Activated CD4-positive, alpha-beta memory T cell treated with anti-CD3 and anti-CD28 coated beads, Interleukin-2, amount 10 ng/mL, durations not matched to agents 7 days and 5 days (primary cell): ENCODE measurements at regions of chr2 and their contacts with region 1.

Region 1: DNA sequence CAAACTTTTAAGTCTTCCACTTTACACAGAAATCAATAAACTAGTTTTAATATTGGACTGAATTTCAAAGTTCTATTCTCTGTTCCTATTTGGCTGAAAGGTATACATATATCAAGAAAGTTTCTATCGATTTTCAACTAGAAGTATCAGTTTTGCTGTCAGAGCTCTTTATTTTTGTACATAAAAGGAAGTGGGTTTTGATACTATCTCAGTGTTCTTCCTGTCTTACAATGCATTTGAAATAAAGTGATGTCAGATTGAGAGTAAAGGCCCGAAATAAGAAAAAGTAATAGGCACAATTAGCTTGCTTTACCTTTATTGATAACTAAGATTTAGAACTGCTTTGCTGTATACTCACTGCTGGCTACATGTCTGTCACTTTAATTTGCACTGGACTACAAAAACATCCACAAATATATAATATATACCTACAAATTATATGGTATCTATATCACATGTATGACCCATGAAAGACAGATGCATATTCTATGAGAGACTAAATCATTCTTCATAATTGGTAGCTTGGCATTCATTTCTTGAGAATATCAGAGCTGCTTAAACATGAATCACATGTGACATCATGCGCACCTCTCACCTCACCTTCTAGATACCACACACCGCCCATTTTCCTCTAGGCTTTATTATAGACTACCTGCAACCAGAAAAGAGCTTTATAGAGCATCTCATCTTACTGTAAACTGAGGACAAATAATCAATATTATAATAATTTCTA is 83.6 kb downstream of the ASXL2 start:
- DNase-seq: no peak
- H3K4me3 Mint-ChIP-seq: peak overlapping the region; percentile 73
- H3K27ac Mint-ChIP-seq: peak overlapping the region; percentile 84
- H3K4me1 Mint-ChIP-seq: peaks cover 81% of the 10 kb centered on the region
- H3K27me3 Mint-ChIP-seq: no peaks in the 10 kb centered on the region

Region 2: DNA sequence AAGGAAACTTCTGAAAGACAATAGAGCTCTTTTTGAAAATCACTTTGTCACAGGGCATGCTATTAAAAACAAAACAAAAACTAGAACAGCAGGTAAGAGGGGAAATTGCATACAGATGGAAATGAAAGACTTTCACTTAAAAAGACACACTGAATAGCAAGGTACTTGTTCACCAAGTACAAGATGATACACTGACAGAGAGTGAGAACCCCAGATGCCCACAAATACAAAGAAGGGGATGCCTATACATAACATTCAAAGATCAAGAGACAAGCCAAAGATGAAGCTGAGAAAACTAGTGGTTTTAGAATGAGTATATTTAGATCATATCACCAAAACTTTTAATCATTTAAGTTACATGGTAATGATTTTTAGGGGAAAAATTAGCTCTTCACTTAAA is 22.9 kb after region 1 on chr2:
- CTCF ChIA-PET with region 1: interaction called, 3 read pairs
- POLR2A ChIA-PET with region 1: interaction called, 23 read pairs
- DNase-seq: no peak
- H3K4me3 Mint-ChIP-seq: no peak overlapping the region
- H3K27ac Mint-ChIP-seq: peak overlapping the region; percentile 32
- H3K4me1 Mint-ChIP-seq: peaks cover 38% of the 10 kb centered on the region
- H3K27me3 Mint-ChIP-seq: peaks cover 4% of the 10 kb centered on the region

Region 3: GRCh38 chr2:25825238-25825637 is 30.5 kb after region 1 on chr2:
- CTCF ChIA-PET with region 1: interaction called, 7 read pairs
- POLR2A ChIA-PET with region 1: interaction called, 10 read pairs
- DNase-seq: peak; percentile 47
- H3K4me3 Mint-ChIP-seq: peak overlapping the region; percentile 5
- H3K27ac Mint-ChIP-seq: peak overlapping the region; percentile 12
- H3K4me1 Mint-ChIP-seq: peaks cover 57% of the 10 kb centered on the region
- H3K27me3 Mint-ChIP-seq: peaks cover 4% of the 10 kb centered on the region

Region 4: GRCh38 chr2:25878361-25879132 is 83.8 kb after region 1 on chr2 and contains the start of gene ASXL2:
- CTCF ChIA-PET with region 1: no interaction called
- POLR2A ChIA-PET with region 1: interaction called, 15 read pairs
- DNase-seq: peak; percentile 98
- H3K4me3 Mint-ChIP-seq: peak within 1 kb of the TSS; percentile 95
- H3K27ac Mint-ChIP-seq: peak within 1 kb of the TSS; percentile 99
- H3K4me1 Mint-ChIP-seq: peaks cover 41% of the 10 kb centered on the region
- H3K27me3 Mint-ChIP-seq: no peaks in the 10 kb centered on the region
- total RNA-seq, gene ASXL2: 43.7 to 45.0 TPM